Heart right ventricle (tissue), 16 donors: ENCODE measurements at regions of chrX and their contacts with region 1.

Region 1: DNA sequence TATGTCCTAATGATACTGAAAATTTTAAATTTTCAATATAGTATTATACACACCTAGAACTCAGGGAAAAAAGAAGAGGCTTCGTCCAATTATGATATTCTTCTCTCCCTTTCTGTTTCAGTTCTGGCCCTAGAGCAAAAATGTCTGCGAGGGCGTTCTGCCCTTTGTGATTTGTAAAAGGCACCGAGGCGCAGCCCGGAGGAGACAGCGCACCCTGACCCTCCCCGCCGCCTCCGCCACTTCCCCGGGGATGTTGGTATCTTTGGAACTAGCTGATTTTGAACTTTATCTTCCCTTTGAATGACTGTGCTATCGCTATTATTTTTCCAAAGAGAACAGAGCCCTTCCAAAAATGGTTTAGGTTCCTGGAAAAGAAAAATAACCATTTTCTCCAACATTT is 173.2 kb upstream of the FAM9B start:
- DNase-seq: peak; percentile 4 to 13
- ATAC-seq: peak in 1 of 8 donors; percentile 35
- H3K4me3 ChIP-seq: peak overlapping the region in 2 of 10 donors; percentile 7 to 22
- H3K27ac ChIP-seq: no peak overlapping the region
- H3K4me1 ChIP-seq: no peaks in the 10 kb centered on the region
- H3K27me3 ChIP-seq: peaks cover 0 to 65% (median 0%) of the 10 kb centered on the region in 7 donors
- CTCF ChIP-seq: no peak

Region 2: GRCh38 chrX:9233141-9233540 is 26.0 kb after region 1 on chrX:
- intact Hi-C with region 1: loop called in 1 of 10 experiments (anchors 1 kb)
- DNase-seq: no peak
- ATAC-seq: no peak
- H3K4me3 ChIP-seq: no peak overlapping the region
- H3K27ac ChIP-seq: no peak overlapping the region
- H3K4me1 ChIP-seq: no peaks in the 10 kb centered on the region
- H3K27me3 ChIP-seq: peaks cover 0 to 9% (median 0%) of the 10 kb centered on the region in 7 donors
- CTCF ChIP-seq: no peak

Region 3: DNA sequence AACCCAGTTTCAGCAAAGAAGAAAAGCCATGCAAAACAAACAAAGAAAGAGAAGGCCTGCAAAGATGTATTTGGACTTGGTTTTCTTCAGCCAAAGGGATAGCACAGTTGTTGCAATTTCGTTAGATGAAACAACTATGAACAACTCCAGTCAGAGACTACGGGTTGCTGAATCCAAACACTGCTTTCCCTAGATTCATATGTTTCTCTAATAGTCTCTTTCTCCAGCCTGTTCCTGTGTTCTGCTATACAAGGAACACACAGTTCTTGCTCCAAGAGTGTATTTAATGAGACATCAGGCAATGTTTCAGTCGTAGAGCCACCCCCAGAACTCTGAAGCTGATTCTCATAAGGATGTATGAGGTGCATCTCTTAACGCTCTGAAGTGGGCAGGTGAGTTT is 95.2 kb after region 1 on chrX:
- intact Hi-C with region 1: loop called in 1 of 10 experiments (anchors 10 kb)
- DNase-seq: no peak
- ATAC-seq: peak in 1 of 8 donors; percentile 62
- H3K4me3 ChIP-seq: no peak overlapping the region
- H3K27ac ChIP-seq: peak overlapping the region in 1 of 10 donors; percentile 36
- H3K4me1 ChIP-seq: no peaks in the 10 kb centered on the region
- H3K27me3 ChIP-seq: peaks cover 0 to 40% (median 0%) of the 10 kb centered on the region in 7 donors
- CTCF ChIP-seq: no peak

Region 4: DNA sequence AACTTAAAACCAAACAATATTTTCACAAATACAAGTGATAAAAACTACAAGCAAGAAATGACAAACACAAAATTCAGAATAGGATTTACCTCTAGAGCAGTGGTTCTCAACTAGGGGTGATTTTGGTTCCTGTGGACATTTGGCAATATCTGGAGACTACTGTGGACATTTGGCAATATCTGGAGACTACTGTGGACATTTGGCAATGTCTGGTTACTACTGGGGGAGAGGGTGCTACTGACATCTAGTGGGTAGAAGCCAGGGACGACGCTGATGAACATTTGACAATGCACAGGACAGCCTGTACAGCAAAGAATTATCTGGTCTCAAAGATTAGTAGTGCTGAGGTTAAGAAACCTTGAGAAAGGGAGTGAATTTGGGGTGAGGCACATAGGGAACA is 1119.4 kb after region 1 on chrX:
- intact Hi-C with region 1: no loop called
- DNase-seq: peak in 1 of 2 donors; percentile 3
- ATAC-seq: peak in 1 of 8 donors; percentile 85
- H3K4me3 ChIP-seq: no peak overlapping the region
- H3K27ac ChIP-seq: no peak overlapping the region
- H3K4me1 ChIP-seq: no peaks in the 10 kb centered on the region
- H3K27me3 ChIP-seq: peaks cover 0 to 4% (median 0%) of the 10 kb centered on the region in 7 donors
- CTCF ChIP-seq: peak in 7 of 9 donors; percentile 23 to 45 (median 30)